ENCODE measurements at regions of chr4 and their contacts with region 1.

Region 1: DNA sequence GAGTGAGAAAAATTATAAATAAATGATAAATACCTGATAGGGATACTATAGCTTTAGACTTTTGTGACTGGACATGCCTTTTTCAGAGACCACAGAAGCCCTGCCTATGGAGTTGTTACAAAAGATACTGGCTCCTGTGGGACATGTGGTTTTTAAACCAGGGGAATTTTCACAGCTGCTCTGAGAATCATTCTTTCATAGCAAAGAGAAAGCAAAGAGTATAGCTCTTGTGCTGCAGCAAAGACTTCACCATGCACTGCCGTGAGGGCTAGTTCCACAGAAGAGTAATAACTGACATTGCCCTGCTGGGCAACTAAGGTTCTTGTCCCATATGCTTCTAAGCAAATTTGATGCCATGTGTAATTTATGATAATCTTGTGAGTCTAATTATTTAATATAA is 98.2 kb downstream of the MAPK10 start:
- DNase-seq: no peak
- ATAC-seq: no peak
- H3K4me3 ChIP-seq: no peak overlapping the region
- H3K27ac ChIP-seq: no peak overlapping the region
- H3K4me1 ChIP-seq: no peaks in the 10 kb centered on the region
- H3K27me3 ChIP-seq: no peaks in the 10 kb centered on the region
- CTCF ChIP-seq: no peak

Region 2: GRCh38 chr4:86233681-86234080 is 28.0 kb before region 1 on chr4:
- CTCF ChIA-PET with region 1: no interaction called
- POLR2A ChIA-PET with region 1: no interaction called
- intact Hi-C with region 1: no loop called
- DNase-seq: no peak
- ATAC-seq: no peak
- H3K4me3 ChIP-seq: no peak overlapping the region
- H3K27ac ChIP-seq: no peak overlapping the region
- H3K4me1 ChIP-seq: no peaks in the 10 kb centered on the region
- H3K27me3 ChIP-seq: no peaks in the 10 kb centered on the region
- CTCF ChIP-seq: no peak

Region 3: GRCh38 chr4:86497980-86498862 is 236.6 kb after region 1 on chr4:
- CTCF ChIA-PET with region 1: no interaction called
- POLR2A ChIA-PET with region 1: no interaction called
- intact Hi-C with region 1: loop called (anchors 2 kb)
- DNase-seq: peak; percentile 71
- ATAC-seq: peak; percentile 42
- H3K4me3 ChIP-seq: no peak overlapping the region
- H3K27ac ChIP-seq: peak overlapping the region; percentile 84
- H3K4me1 ChIP-seq: peaks cover 55% of the 10 kb centered on the region
- H3K27me3 ChIP-seq: no peaks in the 10 kb centered on the region
- CTCF ChIP-seq: peak; percentile 80

Measured in PC-3 (cell line).